ENCODE measurements at regions of chr11 and their contacts with region 1.

Region 1: DNA sequence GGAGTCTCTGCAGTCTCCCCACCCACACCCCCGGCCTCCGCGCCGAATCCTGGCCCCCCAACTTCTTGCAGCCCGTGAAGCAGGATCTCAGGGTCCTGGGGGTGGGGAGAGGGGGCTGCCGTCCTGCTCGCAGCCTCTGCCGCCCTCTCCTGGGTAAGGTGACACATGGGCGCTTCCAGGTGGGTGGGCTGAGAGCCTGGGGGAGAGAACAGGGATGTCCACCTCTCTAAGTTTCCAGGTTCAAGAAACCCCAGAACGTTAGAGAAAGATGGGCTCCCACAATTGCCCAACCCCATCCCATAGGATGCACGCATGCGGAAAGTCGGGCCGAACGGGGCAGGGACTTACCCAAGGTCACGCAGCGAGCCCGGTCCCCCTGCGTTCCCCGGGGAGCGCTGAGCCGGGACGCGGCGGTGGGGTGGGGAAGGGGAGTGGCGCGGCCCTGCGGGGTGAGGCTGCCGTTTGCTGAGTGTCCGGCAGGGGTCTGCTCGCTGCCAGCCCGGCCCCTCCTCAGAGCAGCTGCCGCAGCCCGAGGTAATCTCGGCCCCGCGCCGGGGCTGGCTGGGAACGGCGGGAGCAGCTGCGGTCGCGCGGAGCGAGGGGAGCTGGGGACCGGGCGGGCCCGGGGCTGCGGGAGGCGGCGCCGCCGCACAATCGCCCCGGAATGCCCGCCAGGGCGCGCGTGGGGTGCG is 705 bp upstream of the CAPN1 start:
- DNase-seq: peak; percentile 70 to 88
- ATAC-seq: peak; percentile 70
- H3K4me3 ChIP-seq: peak overlapping the region; percentile 81 to 92
- H3K27ac ChIP-seq: no peak overlapping the region
- H3K4me1 ChIP-seq: no peaks in the 10 kb centered on the region
- H3K27me3 ChIP-seq: no peaks in the 10 kb centered on the region

Region 2: GRCh38 chr11:65134386-65135253 is 46.4 kb before region 1 on chr11 and contains the start of gene SYVN1:
- intact Hi-C with region 1: loop called (anchors 1 to 5 kb)
- DNase-seq: peak; percentile 95 to 97
- ATAC-seq: peak; percentile 94
- H3K4me3 ChIP-seq: peak within 1 kb of the TSS; percentile 55 to 68
- H3K27ac ChIP-seq: peak within 1 kb of the TSS; percentile 50 to 89
- H3K4me1 ChIP-seq: no peaks in the 10 kb centered on the region
- H3K27me3 ChIP-seq: no peaks in the 10 kb centered on the region
- total RNA-seq, gene SYVN1: 50.2 to 64.0 TPM